Mammary epithelial cell (primary cell): ENCODE measurements at regions of chr11 and their contacts with region 1.

Region 1: GRCh38 chr11:65988791-65989592 is 13.0 kb downstream of the EIF1AD start:
- DNase-seq: peak; percentile 87
- H3K4me3 ChIP-seq: no peak overlapping the region
- H3K27ac ChIP-seq: no peak overlapping the region
- H3K4me1 ChIP-seq: no peaks in the 10 kb centered on the region
- H3K27me3 ChIP-seq: no peaks in the 10 kb centered on the region
- CTCF ChIP-seq: peak; percentile 87 to 100

Region 2: GRCh38 chr11:65329944-65330403 is 659.0 kb before region 1 on chr11:
- CTCF ChIA-PET with region 1: no interaction called
- dilution Hi-C with region 1: no loop called
- in situ Hi-C with region 1: no loop called
- intact Hi-C with region 1: no loop called
- DNase-seq: peak; percentile 64
- H3K4me3 ChIP-seq: no peak overlapping the region
- H3K27ac ChIP-seq: peak overlapping the region; percentile 24
- H3K4me1 ChIP-seq: peaks cover 11% of the 10 kb centered on the region
- H3K27me3 ChIP-seq: no peaks in the 10 kb centered on the region
- CTCF ChIP-seq: peak; percentile 70 to 79

Region 3: DNA sequence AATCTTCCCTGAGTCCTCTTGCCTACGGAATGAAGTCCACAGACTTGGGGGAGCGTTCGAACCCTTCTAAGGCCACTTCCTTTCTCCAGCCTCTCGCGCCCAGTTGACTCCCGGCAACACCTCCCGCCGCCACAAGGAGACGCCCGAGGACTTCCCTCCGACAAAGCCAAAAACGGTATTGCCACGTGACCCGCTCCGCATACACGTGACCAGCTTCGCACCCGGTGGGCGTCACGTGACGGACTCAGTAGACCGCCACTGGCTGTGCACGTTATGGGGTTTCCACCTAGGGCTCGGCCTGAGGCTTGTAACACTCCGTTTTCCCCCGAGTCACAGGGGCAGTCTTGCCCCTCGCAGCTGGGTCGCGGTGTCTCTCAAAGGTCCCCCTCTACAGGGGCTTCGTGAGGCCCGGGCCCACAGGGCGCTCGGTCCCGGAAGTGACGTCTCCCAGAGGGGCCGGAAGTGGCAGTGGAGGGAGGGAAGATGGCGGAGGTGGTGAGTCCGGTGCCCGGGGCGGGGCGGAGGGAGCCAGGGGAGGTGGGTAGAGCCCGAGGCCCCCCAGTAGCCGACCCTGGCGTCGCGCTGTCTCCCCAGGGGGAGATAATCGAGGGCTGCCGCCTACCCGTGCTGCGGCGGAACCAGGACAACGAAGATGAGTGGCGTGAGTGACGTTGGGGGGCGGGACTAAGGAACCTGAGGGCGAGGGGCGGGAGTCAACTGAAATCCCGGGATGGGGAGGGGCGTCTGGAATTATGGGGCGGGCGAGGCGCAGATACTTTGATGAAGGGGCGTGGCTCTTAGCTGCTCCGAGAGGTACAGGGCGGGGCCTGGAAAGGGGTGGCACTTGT is 277.0 kb before region 1 on chr11 and contains the start of gene KAT5:
- CTCF ChIA-PET with region 1: interaction called, 3 read pairs
- dilution Hi-C with region 1: no loop called
- in situ Hi-C with region 1: loop called in 1 of 2 experiments (anchors 25 kb)
- intact Hi-C with region 1: loop called (anchors 1 kb)
- DNase-seq: peak; percentile 97
- H3K4me3 ChIP-seq: peak within 1 kb of the TSS; percentile 56 to 80 (median 61)
- H3K27ac ChIP-seq: peak within 1 kb of the TSS; percentile 93
- H3K4me1 ChIP-seq: peaks cover 14% of the 10 kb centered on the region
- H3K27me3 ChIP-seq: no peaks in the 10 kb centered on the region
- CTCF ChIP-seq: peak; percentile 94 to 99
- total RNA-seq, gene KAT5: 26.5 to 49.9 TPM

Region 4: GRCh38 chr11:65817835-65818742 is 170.9 kb before region 1 on chr11:
- CTCF ChIA-PET with region 1: no interaction called
- dilution Hi-C with region 1: no loop called
- in situ Hi-C with region 1: no loop called
- intact Hi-C with region 1: loop called (anchors 1 kb)
- DNase-seq: peak; percentile 82
- H3K4me3 ChIP-seq: peak overlapping the region; percentile 61 to 70 (median 64)
- H3K27ac ChIP-seq: peak overlapping the region; percentile 85
- H3K4me1 ChIP-seq: peaks cover 7% of the 10 kb centered on the region
- H3K27me3 ChIP-seq: no peaks in the 10 kb centered on the region
- CTCF ChIP-seq: peak; percentile 88 to 97

Region 5: GRCh38 chr11:65873318-65874156 is 115.5 kb before region 1 on chr11:
- CTCF ChIA-PET with region 1: no interaction called
- dilution Hi-C with region 1: no loop called
- in situ Hi-C with region 1: no loop called
- intact Hi-C with region 1: no loop called
- DNase-seq: peak; percentile 88
- H3K4me3 ChIP-seq: peak overlapping the region; percentile 51 to 75 (median 64)
- H3K27ac ChIP-seq: peak overlapping the region; percentile 36
- H3K4me1 ChIP-seq: peaks cover 10% of the 10 kb centered on the region
- H3K27me3 ChIP-seq: no peaks in the 10 kb centered on the region
- CTCF ChIP-seq: no peak

Region 6: GRCh38 chr11:65888163-65888814 is 100.7 kb before region 1 on chr11 and contains the start of gene FIBP:
- CTCF ChIA-PET with region 1: no interaction called
- dilution Hi-C with region 1: no loop called
- in situ Hi-C with region 1: loop called in 1 of 2 experiments (anchors 5 kb)
- intact Hi-C with region 1: loop called (anchors 1 kb)
- DNase-seq: peak; percentile 95
- H3K4me3 ChIP-seq: peak within 1 kb of the TSS; percentile 78 to 89 (median 80)
- H3K27ac ChIP-seq: peak within 1 kb of the TSS; percentile 70
- H3K4me1 ChIP-seq: peaks cover 56% of the 10 kb centered on the region
- H3K27me3 ChIP-seq: no peaks in the 10 kb centered on the region
- CTCF ChIP-seq: peak; percentile 30 to 80
- total RNA-seq, gene FIBP: 84.1 to 125 TPM

Region 7: DNA sequence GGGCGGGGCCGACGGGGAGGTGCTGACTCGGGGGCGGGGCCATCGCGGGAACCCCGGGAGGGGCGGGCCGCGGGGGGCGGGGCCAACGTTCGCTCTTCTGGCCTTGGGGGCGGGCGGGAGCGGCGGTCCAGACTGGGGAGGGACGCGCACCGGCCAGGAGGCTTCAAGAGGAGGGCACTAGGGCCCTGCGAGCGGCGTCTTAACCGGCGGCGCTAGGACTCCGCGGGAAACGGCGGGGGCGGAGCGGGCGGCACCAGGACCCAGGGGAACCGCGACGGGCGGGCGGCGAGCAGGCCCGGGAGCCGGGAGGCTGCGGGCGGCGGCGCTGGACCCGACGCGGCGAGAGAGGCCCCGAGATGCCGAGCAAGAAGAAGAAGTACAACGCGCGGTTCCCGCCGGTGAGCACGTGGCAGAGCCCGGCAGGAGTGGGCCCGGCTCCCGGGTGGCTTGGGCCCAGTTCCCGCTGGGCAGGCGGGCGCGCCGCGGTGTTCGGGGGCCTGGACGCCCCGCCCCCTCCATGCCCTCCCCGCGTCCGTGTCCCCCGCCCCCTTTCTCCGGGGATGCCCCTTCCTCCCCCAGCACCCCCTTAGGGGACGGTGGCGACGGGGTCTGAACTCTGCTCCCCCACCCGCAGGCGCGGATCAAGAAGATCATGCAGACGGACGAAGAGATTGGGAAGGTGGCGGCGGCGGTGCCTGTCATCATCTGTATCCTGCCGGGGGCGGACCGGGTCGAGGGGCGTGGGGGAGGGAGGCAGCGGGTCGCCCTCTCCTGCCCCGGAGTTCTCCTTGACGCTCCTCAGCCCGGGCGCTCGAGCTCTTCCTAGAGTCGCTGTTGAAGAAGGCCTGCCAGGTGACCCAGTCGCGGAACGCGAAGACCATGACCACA is 69.6 kb before region 1 on chr11 and contains the start of gene DRAP1:
- CTCF ChIA-PET with region 1: no interaction called
- dilution Hi-C with region 1: no loop called
- in situ Hi-C with region 1: no loop called
- intact Hi-C with region 1: loop called (anchors 2 kb)
- DNase-seq: peak; percentile 97
- H3K4me3 ChIP-seq: peak within 1 kb of the TSS; percentile 66 to 83 (median 80)
- H3K27ac ChIP-seq: peak within 1 kb of the TSS; percentile 92
- H3K4me1 ChIP-seq: peaks cover 60% of the 10 kb centered on the region
- H3K27me3 ChIP-seq: no peaks in the 10 kb centered on the region
- CTCF ChIP-seq: no peak
- total RNA-seq, gene DRAP1: 121 to 396 TPM

Region 8: DNA sequence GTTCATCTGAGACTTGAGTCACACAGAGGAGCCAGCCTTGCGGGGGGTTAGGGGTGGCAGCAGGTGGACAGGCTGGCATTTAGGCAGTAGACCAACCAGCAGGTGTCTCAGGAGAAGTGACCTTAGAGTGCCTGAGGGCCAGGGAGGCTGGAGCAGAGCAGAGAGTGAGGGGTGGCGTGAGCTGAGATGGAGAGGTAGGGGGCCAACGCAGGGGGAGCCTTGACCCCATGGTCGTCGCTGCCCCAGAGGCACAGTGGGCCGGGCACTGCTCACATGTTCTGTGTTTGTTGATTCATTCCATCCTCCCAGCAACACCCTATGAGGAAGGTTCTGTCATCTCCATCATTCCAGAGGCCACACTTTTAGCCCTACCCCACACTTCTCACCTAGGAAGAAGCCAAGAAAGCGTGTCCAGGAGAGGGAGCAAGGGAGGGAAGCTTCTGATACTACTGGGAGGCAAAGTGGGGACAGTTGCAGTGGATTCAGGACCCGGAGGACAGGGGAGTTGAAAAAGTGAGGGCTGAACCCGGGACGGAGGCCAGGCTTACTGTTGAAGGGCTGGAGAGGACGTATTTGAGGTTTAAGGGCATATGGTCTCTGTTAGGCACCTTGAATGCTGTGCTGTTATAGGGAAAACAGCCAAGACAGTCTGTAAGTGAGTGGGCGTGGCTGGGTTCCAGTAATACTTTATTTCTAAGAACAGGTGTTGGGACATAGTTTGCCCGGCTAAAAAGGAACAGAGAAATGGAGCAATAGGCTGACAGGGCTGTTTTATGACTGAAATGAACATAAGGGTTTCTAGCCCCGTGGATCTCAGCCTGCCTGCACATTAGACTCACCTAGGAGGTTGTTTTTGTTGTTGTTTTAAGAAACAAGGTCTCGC is 20.2 kb before region 1 on chr11:
- CTCF ChIA-PET with region 1: interaction called, 26 read pairs
- dilution Hi-C with region 1: no loop called
- in situ Hi-C with region 1: no loop called
- intact Hi-C with region 1: no loop called
- DNase-seq: no peak
- H3K4me3 ChIP-seq: no peak overlapping the region
- H3K27ac ChIP-seq: no peak overlapping the region
- H3K4me1 ChIP-seq: peaks cover 9% of the 10 kb centered on the region
- H3K27me3 ChIP-seq: no peaks in the 10 kb centered on the region
- CTCF ChIP-seq: no peak

Region 9: DNA sequence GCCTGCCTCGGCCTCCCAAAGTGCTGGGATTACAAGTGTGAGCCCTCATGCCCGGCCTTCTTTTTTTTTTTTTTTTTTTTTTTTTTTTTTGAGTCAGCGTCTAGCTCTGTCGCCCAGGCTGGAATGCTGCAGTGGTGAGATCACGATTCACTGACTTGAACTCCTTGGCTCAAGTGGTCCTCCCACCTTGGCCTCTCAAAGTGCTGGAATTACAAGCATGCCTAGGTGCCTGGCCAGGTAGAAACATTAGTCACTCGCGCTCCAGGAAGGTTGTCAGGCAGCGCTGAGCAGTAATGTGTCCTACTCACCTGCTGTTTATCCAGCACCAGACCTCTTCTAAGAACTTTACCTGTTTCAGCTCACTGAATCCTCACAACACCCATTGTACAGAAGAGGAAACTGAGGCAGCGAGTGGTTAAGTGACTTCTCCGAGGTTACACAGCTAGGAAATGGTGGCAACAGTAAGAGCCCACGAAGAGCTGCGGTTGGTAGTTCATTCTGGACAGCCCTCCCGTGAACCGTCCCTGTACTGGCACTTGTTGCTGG is 22.3 kb after region 1 on chr11:
- CTCF ChIA-PET with region 1: no interaction called
- dilution Hi-C with region 1: no loop called
- in situ Hi-C with region 1: no loop called
- intact Hi-C with region 1: no loop called
- DNase-seq: peak; percentile 97
- H3K4me3 ChIP-seq: no peak overlapping the region
- H3K27ac ChIP-seq: peak overlapping the region; percentile 13
- H3K4me1 ChIP-seq: peaks cover 57% of the 10 kb centered on the region
- H3K27me3 ChIP-seq: no peaks in the 10 kb centered on the region
- CTCF ChIP-seq: no peak

Region 10: GRCh38 chr11:66069715-66070603 is 81.0 kb after region 1 on chr11 and contains the start of gene PACS1:
- CTCF ChIA-PET with region 1: no interaction called
- dilution Hi-C with region 1: no loop called
- in situ Hi-C with region 1: no loop called
- intact Hi-C with region 1: loop called (anchors 1 kb)
- DNase-seq: peak; percentile 48
- H3K4me3 ChIP-seq: peak within 1 kb of the TSS; percentile 76 to 82 (median 78)
- H3K27ac ChIP-seq: peak within 1 kb of the TSS; percentile 26
- H3K4me1 ChIP-seq: peaks cover 22% of the 10 kb centered on the region
- H3K27me3 ChIP-seq: no peaks in the 10 kb centered on the region
- CTCF ChIP-seq: no peak
- total RNA-seq, gene PACS1: 34.0 to 48.1 TPM